ENCODE measurements at regions of chr14 and their contacts with region 1.

Region 1: DNA sequence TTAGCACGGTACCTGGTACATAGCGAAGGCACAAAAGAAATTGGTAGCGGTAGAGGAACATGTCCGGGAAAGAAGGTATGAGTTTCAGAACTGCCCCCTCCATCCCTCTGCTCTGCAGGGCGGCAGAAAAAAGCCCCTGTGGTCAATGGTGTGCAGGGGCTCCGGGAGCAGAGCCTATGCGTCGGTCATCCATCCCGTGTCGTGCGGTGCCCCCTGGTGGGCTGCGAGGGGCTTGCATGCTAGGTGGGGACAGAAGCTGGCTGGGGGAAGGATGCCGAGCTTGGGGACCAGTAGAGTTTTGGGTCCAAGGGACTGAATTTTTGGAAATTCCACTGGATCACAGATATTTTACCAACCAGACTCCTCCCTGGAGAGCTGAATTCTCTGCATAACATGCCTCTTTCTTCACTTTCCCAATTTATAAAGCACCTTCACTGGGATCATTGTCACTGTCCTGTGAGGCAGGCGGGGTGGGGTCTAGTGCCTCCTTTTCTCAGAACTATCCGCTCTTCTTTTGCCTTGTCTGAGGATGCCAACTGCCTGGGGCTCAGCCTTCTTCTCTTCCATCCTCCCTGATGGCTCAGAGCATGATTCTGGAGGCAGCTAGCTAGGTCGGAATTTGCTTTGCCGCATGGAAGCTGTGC is 148.7 kb downstream of the SMOC1 start:
- DNase-seq: no peak
- H3K4me3 ChIP-seq: no peak overlapping the region
- H3K27ac ChIP-seq: no peak overlapping the region
- H3K27me3 ChIP-seq: no peaks in the 10 kb centered on the region
- CTCF ChIP-seq: peak; percentile 96

Region 2: GRCh38 chr14:69501423-69501838 is 526.5 kb before region 1 on chr14:
- CTCF ChIA-PET with region 1: no interaction called
- POLR2A ChIA-PET with region 1: no interaction called
- DNase-seq: no peak
- H3K4me3 ChIP-seq: no peak overlapping the region
- H3K27ac ChIP-seq: no peak overlapping the region
- H3K27me3 ChIP-seq: peaks cover 40% of the 10 kb centered on the region
- CTCF ChIP-seq: no peak

Region 3: GRCh38 chr14:69802079-69802478 is 225.8 kb before region 1 on chr14:
- CTCF ChIA-PET with region 1: no interaction called
- POLR2A ChIA-PET with region 1: no interaction called
- DNase-seq: no peak
- H3K4me3 ChIP-seq: no peak overlapping the region
- H3K27ac ChIP-seq: no peak overlapping the region
- H3K27me3 ChIP-seq: no peaks in the 10 kb centered on the region
- CTCF ChIP-seq: no peak

Region 4: GRCh38 chr14:69863083-69863482 is 164.8 kb before region 1 on chr14:
- CTCF ChIA-PET with region 1: interaction called, 14 read pairs
- POLR2A ChIA-PET with region 1: no interaction called
- DNase-seq: no peak
- H3K4me3 ChIP-seq: no peak overlapping the region
- H3K27ac ChIP-seq: no peak overlapping the region
- H3K27me3 ChIP-seq: peaks cover 34% of the 10 kb centered on the region
- CTCF ChIP-seq: peak; percentile 10; the same call in 1 of the 2 replicates

Region 5: GRCh38 chr14:69879175-69880043 is 148.5 kb before region 1 on chr14 and contains the start of gene SMOC1:
- CTCF ChIA-PET with region 1: interaction called, 46 read pairs
- POLR2A ChIA-PET with region 1: no interaction called
- DNase-seq: peak; percentile 47
- H3K4me3 ChIP-seq: peak within 1 kb of the TSS; percentile 70
- H3K27ac ChIP-seq: no peak within 1 kb of the TSS
- H3K27me3 ChIP-seq: peaks cover 7% of the 10 kb centered on the region
- CTCF ChIP-seq: no peak
- polyA plus RNA-seq, gene SMOC1: 19.2 and 21.9 TPM in 2 replicates

Region 6: DNA sequence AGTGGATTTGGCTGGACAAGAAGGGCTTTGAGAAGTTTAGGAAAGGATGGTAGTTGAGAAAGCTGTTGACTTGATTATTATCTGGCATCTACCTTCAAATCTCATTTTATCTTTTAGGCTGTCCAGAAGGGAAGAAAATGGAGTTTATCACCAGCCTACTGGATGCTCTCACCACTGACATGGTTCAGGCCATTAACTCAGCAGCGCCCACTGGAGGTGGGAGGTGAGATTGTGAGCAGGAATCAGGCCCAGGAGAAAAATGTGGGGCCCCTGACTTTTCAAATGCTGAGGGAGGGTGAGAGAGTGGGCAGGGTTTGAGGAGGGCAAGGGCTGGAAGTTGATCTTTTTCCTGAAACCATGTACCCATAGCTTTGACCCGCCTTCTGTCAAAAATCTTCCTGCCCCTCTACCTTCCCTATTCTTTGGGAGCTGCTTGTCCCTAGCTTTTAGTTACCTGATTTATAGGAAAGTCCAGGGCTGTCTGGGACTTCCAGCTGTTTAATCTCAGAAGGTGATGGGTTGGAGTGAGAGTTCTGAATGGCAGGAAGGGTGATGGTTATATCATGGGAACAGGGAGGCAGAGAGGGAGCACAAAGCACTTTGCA is 14.5 kb before region 1 on chr14:
- CTCF ChIA-PET with region 1: interaction called, 20 read pairs
- POLR2A ChIA-PET with region 1: no interaction called
- DNase-seq: no peak
- H3K4me3 ChIP-seq: no peak overlapping the region
- H3K27ac ChIP-seq: no peak overlapping the region
- H3K27me3 ChIP-seq: no peaks in the 10 kb centered on the region
- CTCF ChIP-seq: peak; percentile 75

Region 7: GRCh38 chr14:70073924-70074566 is 46.1 kb after region 1 on chr14:
- CTCF ChIA-PET with region 1: interaction called, 16 read pairs
- POLR2A ChIA-PET with region 1: no interaction called
- DNase-seq: peak; percentile 24
- H3K4me3 ChIP-seq: no peak overlapping the region
- H3K27ac ChIP-seq: no peak overlapping the region
- H3K27me3 ChIP-seq: peaks cover 10% of the 10 kb centered on the region
- CTCF ChIP-seq: peak; percentile 89

Region 8: GRCh38 chr14:70339044-70339443 is 311.1 kb after region 1 on chr14:
- CTCF ChIA-PET with region 1: no interaction called
- POLR2A ChIA-PET with region 1: no interaction called
- DNase-seq: no peak
- H3K4me3 ChIP-seq: no peak overlapping the region
- H3K27ac ChIP-seq: no peak overlapping the region
- H3K27me3 ChIP-seq: no peaks in the 10 kb centered on the region
- CTCF ChIP-seq: no peak

Measured in AG04450 (cell line).